Naive thymus-derived CD4-positive, alpha-beta T cell (primary cell): ENCODE measurements at regions of chr1 and their contacts with region 1.

Region 1: GRCh38 chr1:247373721-247374141 is 42.1 kb upstream of the ZNF496 start:
- DNase-seq: peak; percentile 37 to 64 (median 48)
- ATAC-seq: peak; percentile 84
- H3K4me3 ChIP-seq: peak overlapping the region; percentile 46
- H3K4me3 Mint-ChIP-seq: peak overlapping the region in 9 of 10 donors; percentile 14 to 70 (median 58)
- H3K27ac ChIP-seq: no peak overlapping the region
- H3K27ac Mint-ChIP-seq: no peak overlapping the region
- H3K4me1 ChIP-seq: no peaks in the 10 kb centered on the region
- H3K4me1 Mint-ChIP-seq: peaks cover 0 to 10% (median 7%) of the 10 kb centered on the region in 7 donors
- H3K27me3 ChIP-seq: no peaks in the 10 kb centered on the region
- H3K27me3 Mint-ChIP-seq: peaks cover 4 to 19% (median 6%) of the 10 kb centered on the region in 5 donors

Region 2: GRCh38 chr1:247331172-247331991 is 42.3 kb before region 1 on chr1 and contains the start of gene ZNF496:
- CTCF ChIA-PET with region 1: no interaction called
- POLR2A ChIA-PET with region 1: no interaction called
- intact Hi-C with region 1: loop called in 1 of 2 experiments (anchors 1 kb)
- DNase-seq: peak; percentile 46 to 77 (median 67)
- ATAC-seq: peak; percentile 76
- H3K4me3 ChIP-seq: peak within 1 kb of the TSS; percentile 64
- H3K4me3 Mint-ChIP-seq: peak within 1 kb of the TSS; percentile 91 to 99 (median 94)
- H3K27ac ChIP-seq: peak within 1 kb of the TSS; percentile 72
- H3K27ac Mint-ChIP-seq: peak within 1 kb of the TSS in 8 of 9 donors; percentile 77 to 92 (median 86)
- H3K4me1 ChIP-seq: peaks cover 6 to 14% of the 10 kb centered on the region in 2 donors
- H3K4me1 Mint-ChIP-seq: peaks cover 13 to 43% (median 29%) of the 10 kb centered on the region in 7 donors
- H3K27me3 ChIP-seq: no peaks in the 10 kb centered on the region
- H3K27me3 Mint-ChIP-seq: no peaks in the 10 kb centered on the region
- total RNA-seq, gene ZNF496: 9.5 to 25.1 (median 17.3) TPM

Region 3: GRCh38 chr1:247576495-247576894 is 202.8 kb after region 1 on chr1:
- CTCF ChIA-PET with region 1: no interaction called
- POLR2A ChIA-PET with region 1: no interaction called
- intact Hi-C with region 1: loop called (anchors 1 to 2 kb)
- DNase-seq: peak in 2 of 9 donors; percentile 4
- ATAC-seq: no peak
- H3K4me3 ChIP-seq: no peak overlapping the region
- H3K4me3 Mint-ChIP-seq: no peak overlapping the region
- H3K27ac ChIP-seq: no peak overlapping the region
- H3K27ac Mint-ChIP-seq: no peak overlapping the region
- H3K4me1 ChIP-seq: no peaks in the 10 kb centered on the region
- H3K4me1 Mint-ChIP-seq: peaks cover 0 to 2% (median 0%) of the 10 kb centered on the region in 7 donors
- H3K27me3 ChIP-seq: no peaks in the 10 kb centered on the region
- H3K27me3 Mint-ChIP-seq: peaks cover 0 to 25% (median 13%) of the 10 kb centered on the region in 5 donors